ENCODE measurements at regions of chr19 and their contacts with region 1.

Region 1: GRCh38 chr19:38891771-38892170 is 7.6 kb downstream of the SIRT2 start:
- DNase-seq: no peak
- ATAC-seq: no peak
- H3K4me3 Mint-ChIP-seq: no peak overlapping the region
- H3K27ac Mint-ChIP-seq: no peak overlapping the region
- H3K4me1 Mint-ChIP-seq: peaks cover 5% of the 10 kb centered on the region
- H3K27me3 Mint-ChIP-seq: no peaks in the 10 kb centered on the region
- CTCF ChIP-seq: no peak

Region 2: GRCh38 chr19:38862321-38863059 is 29.3 kb before region 1 on chr19:
- CTCF ChIA-PET with region 1: interaction called, 33 read pairs
- POLR2A ChIA-PET with region 1: no interaction called
- intact Hi-C with region 1: no loop called
- DNase-seq: no peak
- ATAC-seq: no peak
- H3K4me3 Mint-ChIP-seq: no peak overlapping the region
- H3K27ac Mint-ChIP-seq: no peak overlapping the region
- H3K4me1 Mint-ChIP-seq: peaks cover 41% of the 10 kb centered on the region
- H3K27me3 Mint-ChIP-seq: no peaks in the 10 kb centered on the region
- CTCF ChIP-seq: no peak

Region 3: DNA sequence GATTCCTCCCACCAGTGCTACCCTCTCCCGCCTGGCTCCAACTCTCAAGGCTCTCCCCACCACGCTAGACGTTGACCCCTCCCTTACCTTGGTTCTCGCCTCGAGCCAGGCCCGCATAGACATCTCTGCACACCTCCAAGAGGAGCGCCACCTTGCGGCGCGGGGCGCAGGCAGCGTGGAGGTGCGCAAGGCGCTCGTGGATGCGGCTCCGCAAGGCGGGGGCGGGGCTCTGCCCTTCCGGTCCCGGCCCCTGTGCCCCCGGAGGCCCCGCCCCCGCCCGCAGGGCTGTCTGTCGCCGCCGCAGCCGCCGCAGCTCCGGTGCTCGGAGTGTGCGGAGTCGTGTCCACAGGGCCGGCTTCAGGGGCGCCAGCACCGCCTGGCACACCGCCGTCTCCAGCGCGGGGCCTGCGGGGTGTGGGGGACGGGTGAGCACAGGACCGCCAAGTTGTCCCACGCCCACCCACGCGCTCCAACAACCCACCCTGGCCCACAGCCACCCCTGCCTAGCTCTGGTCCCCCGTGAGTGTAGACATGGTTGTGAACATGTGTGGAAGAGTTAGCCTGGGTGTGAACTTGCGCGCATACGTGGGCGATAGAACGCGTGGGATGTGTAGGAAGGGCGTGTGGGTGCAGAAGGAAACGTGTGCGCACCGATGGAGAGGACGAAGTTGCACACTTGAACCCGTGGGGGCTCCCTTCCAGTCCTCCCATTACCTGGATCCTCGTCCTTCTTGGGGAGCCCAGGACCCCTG is 21.7 kb before region 1 on chr19:
- CTCF ChIA-PET with region 1: interaction called, 61 read pairs
- POLR2A ChIA-PET with region 1: interaction called, 9 read pairs
- intact Hi-C with region 1: no loop called
- DNase-seq: peak; percentile 95
- ATAC-seq: peak; percentile 83
- H3K4me3 Mint-ChIP-seq: peak overlapping the region; percentile 85
- H3K27ac Mint-ChIP-seq: peak overlapping the region; percentile 92
- H3K4me1 Mint-ChIP-seq: peaks cover 43% of the 10 kb centered on the region
- H3K27me3 Mint-ChIP-seq: no peaks in the 10 kb centered on the region
- CTCF ChIP-seq: peak; percentile 90

Region 4: DNA sequence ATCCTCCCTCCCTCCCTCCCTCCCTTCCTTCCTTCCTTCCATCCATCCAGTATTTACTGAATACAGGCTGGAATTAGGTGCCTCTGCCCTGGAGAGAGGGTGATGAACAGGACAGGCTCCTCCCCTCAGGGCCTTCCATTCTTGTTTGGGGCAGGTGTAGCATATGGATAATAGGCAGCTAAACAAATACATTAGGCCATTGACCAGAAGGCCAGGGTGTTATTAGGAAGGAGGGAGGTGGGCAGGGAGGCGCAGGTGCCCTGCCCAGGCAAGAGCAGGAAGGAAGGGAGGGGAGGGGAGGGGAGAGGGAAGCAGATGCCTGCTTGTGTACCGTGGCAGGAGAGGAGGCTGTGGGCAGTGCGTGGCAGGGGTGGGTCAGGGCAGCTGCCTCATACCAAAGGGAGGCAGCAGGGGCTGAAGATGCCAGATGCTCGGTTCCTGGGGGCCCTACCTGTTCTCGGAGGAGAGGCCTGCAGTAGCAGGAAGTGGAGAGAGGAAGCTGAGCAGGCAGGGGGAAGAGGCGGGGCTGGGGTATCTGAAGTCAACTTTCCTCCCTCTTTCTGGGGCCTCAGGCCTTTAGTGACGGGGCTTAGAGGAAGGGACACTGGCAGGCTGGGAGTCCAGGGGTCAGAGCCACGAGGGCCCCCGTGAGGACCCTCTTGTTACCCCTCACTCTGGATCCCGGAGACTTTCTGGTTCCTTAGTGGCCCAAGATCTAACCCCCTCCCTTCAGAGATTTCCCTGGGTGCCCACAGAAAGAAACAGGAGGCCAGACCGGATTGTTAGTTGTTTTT is 13.8 kb before region 1 on chr19 and contains the start of gene RINL:
- CTCF ChIA-PET with region 1: interaction called, 61 read pairs
- POLR2A ChIA-PET with region 1: interaction called, 4 read pairs
- intact Hi-C with region 1: no loop called
- DNase-seq: peak; percentile 86
- ATAC-seq: peak; percentile 93
- H3K4me3 Mint-ChIP-seq: peak within 1 kb of the TSS; percentile 95
- H3K27ac Mint-ChIP-seq: peak within 1 kb of the TSS; percentile 98
- H3K4me1 Mint-ChIP-seq: peaks cover 34% of the 10 kb centered on the region
- H3K27me3 Mint-ChIP-seq: no peaks in the 10 kb centered on the region
- CTCF ChIP-seq: no peak
- total RNA-seq, gene RINL: 85.5 to 87.7 TPM

Measured in activated CD8-positive, alpha-beta T cell treated with anti-CD3 and anti-CD28 coated beads for 36 hours (primary cell).